HCT116 (cell line): ENCODE measurements at regions of chr10 and their contacts with region 1.

Region 1: GRCh38 chr10:123870260-123870659 is 21.3 kb downstream of the CPXM2 start:
- DNase-seq: no peak
- ATAC-seq: no peak
- H3K4me3 ChIP-seq: no peak overlapping the region
- H3K27ac ChIP-seq: no peak overlapping the region
- H3K4me1 ChIP-seq: no peaks in the 10 kb centered on the region; a peak in 1 of 4 replicates
- H3K27me3 ChIP-seq: peaks cover 40% of the 10 kb centered on the region
- CTCF ChIP-seq: no peak
- POLR2A ChIP-seq: no peak
- RAD21 ChIP-seq: no peak

Region 2: GRCh38 chr10:123897146-123897545 is 26.9 kb after region 1 on chr10:
- CTCF ChIA-PET with region 1: interaction called, 3 read pairs
- POLR2A ChIA-PET with region 1: no interaction called
- RAD21 ChIA-PET with region 1: no interaction called
- intact Hi-C with region 1: loop called (anchors 2 kb)
- DNase-seq: no peak
- ATAC-seq: peak; percentile 81
- H3K4me3 ChIP-seq: no peak overlapping the region
- H3K27ac ChIP-seq: no peak overlapping the region
- H3K4me1 ChIP-seq: no peaks in the 10 kb centered on the region
- H3K27me3 ChIP-seq: peaks cover 14% of the 10 kb centered on the region
- CTCF ChIP-seq: peak; percentile 37 to 85 (median 81); a peak in 5 of 6 replicates
- POLR2A ChIP-seq: no peak
- RAD21 ChIP-seq: peak; percentile 61